Heart right ventricle (tissue), 16 donors: ENCODE measurements at regions of chr10 and their contacts with region 1.

Region 1: GRCh38 chr10:31018962-31019361 is 12.7 kb downstream of the ZNF438 start:
- DNase-seq: no peak
- ATAC-seq: peak in 1 of 8 donors; percentile 20
- H3K4me3 ChIP-seq: no peak overlapping the region
- H3K27ac ChIP-seq: peak overlapping the region in 7 of 10 donors; percentile 7 to 68 (median 50)
- H3K4me1 ChIP-seq: peaks cover 5 to 49% (median 34%) of the 10 kb centered on the region in 9 donors
- H3K27me3 ChIP-seq: no peaks in the 10 kb centered on the region
- CTCF ChIP-seq: no peak

Region 2: DNA sequence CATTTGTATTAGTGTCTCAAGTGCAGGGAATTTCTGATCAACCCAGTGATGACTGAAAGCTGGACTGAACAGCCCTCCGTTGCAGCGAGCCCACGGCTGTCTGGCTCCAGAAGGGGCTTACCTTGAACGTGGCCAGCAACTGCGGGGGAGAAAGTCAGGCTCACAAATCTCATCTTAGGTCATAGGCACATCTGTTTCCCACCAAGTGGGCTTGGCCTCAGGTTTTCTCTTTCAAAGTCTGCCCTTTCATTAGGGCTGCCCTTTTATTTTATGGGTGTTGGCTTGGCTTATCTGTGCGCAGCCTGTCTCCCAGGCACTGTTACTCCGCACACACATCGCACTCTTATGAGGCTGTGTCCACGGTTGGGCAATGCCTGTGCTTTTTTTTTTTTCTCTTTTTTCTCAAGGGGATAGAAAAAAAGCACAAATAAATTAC is 1137.6 kb before region 1 on chr10:
- intact Hi-C with region 1: no loop called
- DNase-seq: peak in 1 of 2 donors; percentile 28
- ATAC-seq: peak; percentile 59 to 75 (median 66)
- H3K4me3 ChIP-seq: no peak overlapping the region
- H3K27ac ChIP-seq: peak overlapping the region in 7 of 10 donors; percentile 10 to 77 (median 39)
- H3K4me1 ChIP-seq: peaks cover 0 to 44% (median 14%) of the 10 kb centered on the region in 9 donors
- H3K27me3 ChIP-seq: no peaks in the 10 kb centered on the region
- CTCF ChIP-seq: no peak

Region 3: DNA sequence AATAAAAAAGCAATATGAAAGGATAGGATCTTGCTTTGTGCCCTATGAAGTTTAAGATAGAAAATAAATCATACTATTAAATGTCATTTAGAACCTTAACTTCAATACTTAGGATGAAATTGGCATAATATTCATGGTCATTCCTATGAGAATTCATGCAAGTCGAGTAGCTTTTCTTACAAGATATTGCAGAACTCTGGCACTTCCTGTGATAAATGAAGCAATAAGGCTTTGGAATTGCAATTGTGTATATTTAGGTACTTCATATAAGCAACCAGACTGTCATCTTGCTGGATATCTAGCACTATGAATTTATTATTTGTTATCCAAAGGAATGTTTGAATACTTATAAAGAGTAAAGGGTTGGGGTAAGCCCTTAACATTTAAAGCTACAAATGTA is 103.8 kb before region 1 on chr10:
- intact Hi-C with region 1: loop called in 1 of 10 experiments (anchors 10 kb)
- DNase-seq: no peak
- ATAC-seq: no peak
- H3K4me3 ChIP-seq: no peak overlapping the region
- H3K27ac ChIP-seq: no peak overlapping the region
- H3K4me1 ChIP-seq: peaks cover 0 to 27% (median 18%) of the 10 kb centered on the region in 9 donors
- H3K27me3 ChIP-seq: no peaks in the 10 kb centered on the region
- CTCF ChIP-seq: no peak

Region 4: DNA sequence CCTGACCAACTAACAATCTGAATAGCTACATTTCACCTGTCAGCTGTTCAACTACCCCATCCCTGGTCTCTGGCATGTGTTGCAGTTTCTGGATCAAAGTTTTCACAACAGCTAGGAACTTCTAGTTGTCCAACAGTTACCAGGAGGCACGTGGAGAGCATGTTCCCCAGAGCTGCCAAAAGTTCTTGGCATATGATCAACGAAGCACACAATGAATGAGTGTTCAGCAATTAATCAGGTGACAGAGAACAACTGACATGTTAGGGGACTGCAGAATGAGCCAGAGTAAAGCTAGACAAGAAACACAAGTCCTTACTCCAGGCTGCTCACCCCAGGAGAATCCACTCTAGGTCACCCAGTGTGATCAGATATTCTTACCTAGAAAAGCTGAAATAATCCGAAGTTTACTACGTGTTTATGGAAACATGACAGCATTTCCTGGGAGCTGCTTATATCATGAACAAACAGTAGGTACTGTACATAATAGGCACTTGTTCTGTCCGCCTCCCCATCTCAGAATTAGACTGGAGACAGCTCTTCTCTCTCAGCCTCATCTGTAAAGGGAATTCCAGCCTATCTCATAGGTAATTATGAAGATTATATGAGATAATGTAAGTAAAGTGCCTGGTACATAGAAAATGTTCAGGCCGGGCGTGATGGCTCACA is 37.9 kb before region 1 on chr10:
- intact Hi-C with region 1: loop called in 1 of 10 experiments (anchors 5 kb)
- DNase-seq: peak in 1 of 2 donors; percentile 82
- ATAC-seq: peak; percentile 90 to 97 (median 96)
- H3K4me3 ChIP-seq: no peak overlapping the region
- H3K27ac ChIP-seq: peak overlapping the region in 9 of 10 donors; percentile 2 to 70 (median 51)
- H3K4me1 ChIP-seq: peaks cover 0 to 41% (median 21%) of the 10 kb centered on the region in 9 donors
- H3K27me3 ChIP-seq: no peaks in the 10 kb centered on the region
- CTCF ChIP-seq: no peak

Region 5: GRCh38 chr10:31393844-31394243 is 374.9 kb after region 1 on chr10:
- intact Hi-C with region 1: no loop called
- DNase-seq: no peak
- ATAC-seq: no peak
- H3K4me3 ChIP-seq: no peak overlapping the region
- H3K27ac ChIP-seq: no peak overlapping the region
- H3K4me1 ChIP-seq: peaks cover 0 to 60% (median 25%) of the 10 kb centered on the region in 9 donors
- H3K27me3 ChIP-seq: no peaks in the 10 kb centered on the region
- CTCF ChIP-seq: no peak